B cell (primary cell): ENCODE measurements at regions of chr1 and their contacts with region 1.

Region 1: DNA sequence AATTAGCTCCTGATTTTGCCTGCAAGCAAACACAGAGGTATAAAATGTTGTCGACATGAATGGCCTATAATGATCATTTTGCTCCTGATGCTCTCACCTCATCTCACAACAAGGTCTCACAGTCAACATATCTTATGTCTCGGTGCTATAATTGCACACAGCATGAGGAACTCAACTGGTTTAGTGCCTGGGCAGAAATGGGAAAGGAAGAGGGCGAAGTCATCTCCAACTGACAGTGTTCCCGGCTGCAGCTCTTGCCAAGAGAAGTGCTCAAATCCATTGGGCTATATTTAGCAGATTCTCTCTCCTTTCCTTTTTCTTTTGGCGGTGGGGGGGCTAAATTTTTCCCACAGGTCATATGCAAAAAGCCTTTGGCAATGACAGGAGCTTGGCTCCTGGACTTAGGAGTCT is 53.0 kb downstream of the SLC45A1 start:
- DNase-seq: no peak
- ATAC-seq: no peak
- H3K4me3 ChIP-seq: no peak overlapping the region
- H3K4me3 Mint-ChIP-seq: no peak overlapping the region
- H3K27ac ChIP-seq: no peak overlapping the region
- H3K27ac Mint-ChIP-seq: peak overlapping the region; percentile 54
- H3K4me1 ChIP-seq: peaks cover 0 to 7% of the 10 kb centered on the region in 2 donors
- H3K4me1 Mint-ChIP-seq: peaks cover 43% of the 10 kb centered on the region
- H3K27me3 ChIP-seq: no peaks in the 10 kb centered on the region
- H3K27me3 Mint-ChIP-seq: no peaks in the 10 kb centered on the region
- CTCF ChIP-seq: no peak

Region 2: GRCh38 chr1:8302081-8302956 is 68.6 kb before region 1 on chr1:
- CTCF ChIA-PET with region 1: no interaction called
- POLR2A ChIA-PET with region 1: no interaction called
- intact Hi-C with region 1: no loop called
- DNase-seq: no peak
- ATAC-seq: no peak
- H3K4me3 ChIP-seq: no peak overlapping the region
- H3K4me3 Mint-ChIP-seq: no peak overlapping the region
- H3K27ac ChIP-seq: no peak overlapping the region
- H3K27ac Mint-ChIP-seq: no peak overlapping the region
- H3K4me1 ChIP-seq: no peaks in the 10 kb centered on the region
- H3K4me1 Mint-ChIP-seq: no peaks in the 10 kb centered on the region
- H3K27me3 ChIP-seq: peaks cover 0 to 16% (median 4%) of the 10 kb centered on the region in 4 experiments
- H3K27me3 Mint-ChIP-seq: peaks cover 20% of the 10 kb centered on the region
- CTCF ChIP-seq: no peak

Region 3: GRCh38 chr1:8348777-8349491 is 22.0 kb before region 1 on chr1:
- CTCF ChIA-PET with region 1: interaction called, 11 read pairs
- POLR2A ChIA-PET with region 1: no interaction called
- intact Hi-C with region 1: no loop called
- DNase-seq: peak; percentile 78
- ATAC-seq: peak; percentile 89
- H3K4me3 ChIP-seq: no peak overlapping the region
- H3K4me3 Mint-ChIP-seq: no peak overlapping the region
- H3K27ac ChIP-seq: no peak overlapping the region
- H3K27ac Mint-ChIP-seq: peak overlapping the region; percentile 61
- H3K4me1 ChIP-seq: peaks cover 3% of the 10 kb centered on the region in 2 donors
- H3K4me1 Mint-ChIP-seq: peaks cover 4% of the 10 kb centered on the region
- H3K27me3 ChIP-seq: peaks cover 0 to 3% (median 0%) of the 10 kb centered on the region in 4 experiments
- H3K27me3 Mint-ChIP-seq: peaks cover 8% of the 10 kb centered on the region
- CTCF ChIP-seq: peak; percentile 85

Region 4: DNA sequence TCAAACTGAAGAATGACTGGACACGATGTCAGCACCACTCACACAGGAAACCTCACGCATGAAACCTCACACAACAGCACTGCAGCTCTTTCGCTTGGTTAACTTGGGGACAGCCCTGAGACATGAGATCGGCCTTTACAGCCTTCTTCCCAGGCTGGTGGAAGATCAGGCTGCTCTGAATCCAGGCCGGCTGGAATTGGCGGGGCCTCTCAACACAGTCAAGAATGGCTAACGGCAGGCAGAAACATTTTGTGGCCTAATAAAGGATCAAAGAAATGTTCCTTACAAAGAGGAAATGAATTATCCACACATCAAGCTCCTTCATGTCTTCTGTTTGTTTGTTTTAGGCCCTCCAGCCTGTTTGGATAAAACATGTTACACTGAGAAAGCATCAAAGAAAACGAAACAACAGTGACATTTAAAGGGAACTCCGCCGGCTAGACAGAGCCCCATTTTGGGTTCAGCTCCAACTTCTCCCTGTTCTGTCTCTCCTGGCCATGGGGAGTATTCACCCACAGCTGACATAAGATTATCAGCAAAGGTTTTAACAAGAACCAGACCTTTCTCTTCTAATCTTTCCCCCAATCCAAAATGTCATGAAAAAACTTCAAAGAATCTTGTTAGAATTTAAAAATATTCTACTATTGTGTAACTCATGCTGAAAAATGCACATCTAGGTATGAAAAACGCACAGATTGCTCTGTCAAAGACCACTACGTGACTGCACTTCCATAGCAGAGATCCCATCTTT is 78.2 kb after region 1 on chr1:
- CTCF ChIA-PET with region 1: no interaction called
- POLR2A ChIA-PET with region 1: no interaction called
- intact Hi-C with region 1: no loop called
- DNase-seq: no peak
- ATAC-seq: no peak
- H3K4me3 ChIP-seq: no peak overlapping the region
- H3K4me3 Mint-ChIP-seq: no peak overlapping the region
- H3K27ac ChIP-seq: peak overlapping the region in 1 of 2 donors; percentile 30
- H3K27ac Mint-ChIP-seq: no peak overlapping the region
- H3K4me1 ChIP-seq: peaks cover 0 to 3% of the 10 kb centered on the region in 2 donors
- H3K4me1 Mint-ChIP-seq: peaks cover 4% of the 10 kb centered on the region
- H3K27me3 ChIP-seq: no peaks in the 10 kb centered on the region
- H3K27me3 Mint-ChIP-seq: no peaks in the 10 kb centered on the region
- CTCF ChIP-seq: no peak

Region 5: GRCh38 chr1:9388335-9389180 is 1017.6 kb after region 1 on chr1:
- CTCF ChIA-PET with region 1: no interaction called
- POLR2A ChIA-PET with region 1: no interaction called
- intact Hi-C with region 1: no loop called
- DNase-seq: no peak
- ATAC-seq: no peak
- H3K4me3 ChIP-seq: no peak overlapping the region
- H3K4me3 Mint-ChIP-seq: no peak overlapping the region
- H3K27ac ChIP-seq: no peak overlapping the region
- H3K27ac Mint-ChIP-seq: no peak overlapping the region
- H3K4me1 ChIP-seq: no peaks in the 10 kb centered on the region
- H3K4me1 Mint-ChIP-seq: no peaks in the 10 kb centered on the region
- H3K27me3 ChIP-seq: no peaks in the 10 kb centered on the region
- H3K27me3 Mint-ChIP-seq: peaks cover 19% of the 10 kb centered on the region
- CTCF ChIP-seq: no peak

Region 6: DNA sequence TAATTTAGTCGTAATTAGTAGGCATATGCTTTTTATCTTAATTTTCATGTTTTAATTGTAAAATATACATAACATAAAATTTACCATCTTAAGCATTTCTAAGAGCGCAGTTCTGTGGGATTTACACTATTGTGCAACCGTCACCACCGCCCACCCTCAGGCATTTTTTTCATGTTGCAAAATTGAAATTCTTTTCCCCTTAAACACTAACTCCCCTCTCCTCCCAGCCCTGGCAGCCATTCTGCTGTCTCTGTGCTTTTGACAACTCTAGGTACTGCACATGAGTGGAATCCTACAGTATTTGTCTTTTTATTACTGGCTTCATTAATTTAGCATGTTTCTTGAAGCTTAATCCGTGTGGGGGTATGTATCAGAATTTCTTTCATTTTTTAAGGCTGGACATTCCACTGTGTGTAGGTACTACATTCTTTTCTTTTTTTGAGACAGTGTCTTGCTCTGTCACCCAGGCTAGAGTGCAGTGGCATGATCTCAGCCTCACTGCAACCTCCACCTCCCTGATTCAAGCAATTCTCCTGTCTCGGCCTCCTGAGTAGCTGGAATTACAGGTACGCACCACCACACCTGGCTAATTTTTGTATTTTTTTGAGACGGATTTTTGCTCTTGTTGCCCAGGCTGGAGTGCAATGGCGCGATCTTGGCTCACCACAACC is 1288.6 kb after region 1 on chr1:
- CTCF ChIA-PET with region 1: no interaction called
- POLR2A ChIA-PET with region 1: interaction called, 13 read pairs
- intact Hi-C with region 1: no loop called
- DNase-seq: no peak
- ATAC-seq: no peak
- H3K4me3 ChIP-seq: no peak overlapping the region
- H3K4me3 Mint-ChIP-seq: no peak overlapping the region
- H3K27ac ChIP-seq: peak overlapping the region in 1 of 2 donors; percentile 0
- H3K27ac Mint-ChIP-seq: peak overlapping the region; percentile 82
- H3K4me1 ChIP-seq: peaks cover 49 to 66% of the 10 kb centered on the region in 2 donors
- H3K4me1 Mint-ChIP-seq: peaks cover 73% of the 10 kb centered on the region
- H3K27me3 ChIP-seq: no peaks in the 10 kb centered on the region
- H3K27me3 Mint-ChIP-seq: no peaks in the 10 kb centered on the region
- CTCF ChIP-seq: no peak